H1 (cell line): ENCODE measurements at regions of chr2 and their contacts with region 1.

Region 1: DNA sequence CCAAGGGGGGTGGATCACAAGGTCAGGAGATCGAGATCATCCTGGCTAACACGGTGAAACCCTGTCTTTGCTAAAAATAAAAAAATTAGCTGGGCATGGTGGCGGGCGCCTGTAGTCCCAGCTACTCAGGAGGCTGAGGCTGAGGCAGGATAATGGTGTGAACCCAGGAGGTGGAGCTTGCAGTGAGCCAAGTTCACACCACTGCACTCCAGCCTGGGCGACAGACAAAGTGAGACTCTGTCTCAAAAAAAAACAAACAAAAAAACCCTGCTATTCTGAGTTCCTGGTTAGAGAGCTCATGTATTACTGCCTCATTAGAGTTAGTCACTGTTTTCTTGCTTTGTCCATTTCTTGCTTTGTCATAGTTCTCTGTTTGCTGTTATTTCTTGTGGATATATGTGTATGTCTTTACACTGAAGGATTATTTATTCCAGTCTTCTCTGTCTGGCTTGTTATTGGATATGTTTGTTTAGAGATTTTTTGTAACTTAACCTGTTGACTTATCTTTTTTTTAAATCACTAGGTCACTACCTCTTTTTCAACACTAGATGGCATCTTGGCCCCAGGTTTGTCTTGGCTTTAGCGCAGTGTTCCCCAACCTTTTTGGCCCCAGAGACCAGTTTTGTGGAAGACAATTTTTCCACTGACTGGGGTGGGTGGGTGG is 17.0 kb downstream of the TTLL4 start:
- DNase-seq: no peak
- H3K4me3 ChIP-seq: no peak overlapping the region
- H3K27ac ChIP-seq: no peak overlapping the region
- H3K4me1 ChIP-seq: peaks cover 0 to 12% (median 6%) of the 10 kb centered on the region in 4 experiments; a peak in 5 of 7 replicates
- H3K27me3 ChIP-seq: no peaks in the 10 kb centered on the region
- CTCF ChIP-seq: peak in 2 of 3 experiments; percentile 61 to 63; a peak in 3 of 4 replicates
- EP300 ChIP-seq: no peak
- POLR2A ChIP-seq: no peak
- RAD21 ChIP-seq: peak; percentile 74 to 75

Region 2: GRCh38 chr2:218710687-218711549 is 16.7 kb before region 1 on chr2 and contains the start of gene TTLL4:
- CTCF ChIA-PET with region 1: interaction called, 16 read pairs
- POLR2A ChIA-PET with region 1: interaction called, 10 read pairs
- DNase-seq: peak; percentile 77 to 98
- H3K4me3 ChIP-seq: peak within 1 kb of the TSS; percentile 85 to 90 (median 89)
- H3K27ac ChIP-seq: peak within 1 kb of the TSS; percentile 46; the same call in 1 of the 2 replicates
- H3K4me1 ChIP-seq: peaks cover 0 to 4% (median 1%) of the 10 kb centered on the region in 4 experiments; a peak in 4 of 7 replicates
- H3K27me3 ChIP-seq: no peaks in the 10 kb centered on the region
- CTCF ChIP-seq: peak; percentile 78 to 79 (median 79)
- EP300 ChIP-seq: no peak
- POLR2A ChIP-seq: peak; percentile 66 to 76
- RAD21 ChIP-seq: peak; percentile 30 to 49; a peak in 2 of 4 replicates
- total RNA-seq, gene TTLL4: 105 and 106 TPM in 2 replicates

Region 3: GRCh38 chr2:218717262-218717661 is 10.4 kb before region 1 on chr2:
- CTCF ChIA-PET with region 1: interaction called, 12 read pairs
- POLR2A ChIA-PET with region 1: interaction called, 4 read pairs
- DNase-seq: no peak
- H3K4me3 ChIP-seq: no peak overlapping the region
- H3K27ac ChIP-seq: no peak overlapping the region
- H3K4me1 ChIP-seq: peaks cover 0 to 11% (median 3%) of the 10 kb centered on the region in 4 experiments; a peak in 5 of 7 replicates
- H3K27me3 ChIP-seq: no peaks in the 10 kb centered on the region
- CTCF ChIP-seq: no peak
- EP300 ChIP-seq: no peak
- POLR2A ChIP-seq: no peak
- RAD21 ChIP-seq: no peak

Region 4: GRCh38 chr2:218745559-218746469 is 18.2 kb after region 1 on chr2:
- CTCF ChIA-PET with region 1: interaction called, 23 read pairs
- POLR2A ChIA-PET with region 1: no interaction called
- DNase-seq: no peak
- H3K4me3 ChIP-seq: no peak overlapping the region
- H3K27ac ChIP-seq: no peak overlapping the region
- H3K4me1 ChIP-seq: no peaks in the 10 kb centered on the region
- H3K27me3 ChIP-seq: no peaks in the 10 kb centered on the region
- CTCF ChIP-seq: no peak
- EP300 ChIP-seq: no peak
- POLR2A ChIP-seq: no peak
- RAD21 ChIP-seq: no peak

Region 5: GRCh38 chr2:219023045-219023605 is 295.5 kb after region 1 on chr2:
- CTCF ChIA-PET with region 1: no interaction called
- POLR2A ChIA-PET with region 1: no interaction called
- DNase-seq: no peak
- H3K4me3 ChIP-seq: no peak overlapping the region
- H3K27ac ChIP-seq: no peak overlapping the region
- H3K4me1 ChIP-seq: no peaks in the 10 kb centered on the region
- H3K27me3 ChIP-seq: peaks cover 0 to 3% (median 0%) of the 10 kb centered on the region in 4 experiments; a peak in 3 of 7 replicates
- CTCF ChIP-seq: no peak
- EP300 ChIP-seq: no peak
- POLR2A ChIP-seq: no peak
- RAD21 ChIP-seq: no peak